ENCODE measurements at regions of chr11 and their contacts with region 1.

Region 1: DNA sequence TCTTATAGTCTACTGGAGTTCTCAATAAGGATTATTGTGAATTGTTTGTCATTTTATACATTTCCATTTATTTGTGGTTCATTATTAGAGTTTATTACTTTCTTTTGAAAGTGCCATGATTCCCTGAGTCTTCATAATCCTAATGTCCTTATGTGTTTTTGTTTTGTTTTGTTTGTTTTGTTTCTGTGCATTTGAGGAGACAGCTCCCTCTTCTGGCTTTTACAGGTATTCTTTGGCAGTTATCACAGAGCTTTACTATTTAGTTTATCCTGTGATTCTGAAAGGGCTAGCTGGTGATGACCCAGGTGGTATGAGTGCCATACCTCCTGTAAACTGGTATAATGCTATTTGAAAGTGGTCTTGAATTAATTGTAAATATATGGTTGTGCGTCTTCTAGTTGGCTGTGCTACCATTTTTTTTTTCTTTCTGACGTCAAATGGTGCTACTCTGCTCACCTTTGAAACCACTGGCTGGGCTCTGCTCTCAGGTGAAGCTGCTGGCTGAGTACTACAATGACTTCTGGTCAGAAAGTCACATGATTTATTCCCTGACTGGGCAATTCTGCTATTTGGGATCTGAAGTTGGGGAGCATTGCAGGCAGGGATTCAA is 751.2 kb downstream of the JRKL start:
- DNase-seq: peak; percentile 4
- H3K4me3 ChIP-seq: no peak overlapping the region
- H3K27ac ChIP-seq: no peak overlapping the region
- H3K4me1 ChIP-seq: no peaks in the 10 kb centered on the region
- CTCF ChIP-seq: peak; percentile 76

Region 2: GRCh38 chr11:96464700-96465307 is 676.2 kb before region 1 on chr11:
- CTCF ChIA-PET with region 1: no interaction called
- POLR2A ChIA-PET with region 1: no interaction called
- intact Hi-C with region 1: loop called (anchors 5 kb)
- DNase-seq: peak; percentile 77
- H3K4me3 ChIP-seq: no peak overlapping the region
- H3K27ac ChIP-seq: no peak overlapping the region
- H3K4me1 ChIP-seq: no peaks in the 10 kb centered on the region
- CTCF ChIP-seq: peak; percentile 93